Psoas muscle (tissue), 8 donors: ENCODE measurements at regions of chr2 and their contacts with region 1.

Region 1: DNA sequence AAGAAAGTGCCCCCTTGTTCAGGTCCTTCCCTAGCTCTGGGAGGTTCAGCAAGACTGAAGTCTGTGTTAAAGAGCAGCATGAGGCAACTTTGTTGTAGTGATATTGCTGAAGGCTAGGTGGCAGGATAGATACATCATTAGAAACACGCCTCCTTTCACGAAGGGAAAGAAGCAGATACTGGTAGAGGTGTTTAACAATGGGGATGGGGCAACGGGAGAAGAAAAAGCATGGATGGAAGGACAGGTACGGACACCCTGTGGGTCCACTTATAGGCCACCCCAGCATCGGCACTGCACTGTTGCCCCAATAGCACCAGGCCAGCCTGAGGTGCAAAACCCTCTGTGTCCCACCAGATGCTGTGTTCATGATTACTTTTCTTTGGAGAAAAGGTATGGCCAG is 3.5 kb upstream of the IGFBP5 start:
- DNase-seq: no peak
- ATAC-seq: peak; percentile 51 to 62 (median 60)
- H3K4me3 ChIP-seq: no peak overlapping the region
- H3K27ac ChIP-seq: peak overlapping the region; percentile 83
- H3K4me1 ChIP-seq: peaks cover 65% of the 10 kb centered on the region
- H3K27me3 ChIP-seq: no peaks in the 10 kb centered on the region
- CTCF ChIP-seq: peak; percentile 63

Region 2: DNA sequence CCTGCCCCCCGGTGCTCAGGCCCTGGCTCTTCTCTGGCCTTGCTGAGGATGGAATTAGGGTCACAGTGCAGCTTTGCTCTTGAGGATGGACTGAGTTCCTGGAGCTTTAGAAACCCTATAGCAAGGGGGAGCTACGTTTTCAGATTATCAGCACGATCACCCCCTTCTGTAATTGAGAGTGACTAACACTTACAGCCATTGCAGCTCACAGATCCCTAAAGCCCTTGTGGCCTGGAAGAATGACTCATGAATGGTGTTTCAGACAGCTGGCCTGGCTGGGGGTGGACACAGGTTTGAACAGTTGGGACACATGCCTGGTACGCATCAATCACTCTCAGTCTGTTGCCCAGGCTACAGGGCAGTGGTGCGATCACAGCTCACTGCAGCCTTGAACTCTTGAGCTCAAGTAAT is 76.2 kb after region 1 on chr2:
- intact Hi-C with region 1: loop called (anchors 1 to 5 kb)
- DNase-seq: peak; percentile 86 to 93
- ATAC-seq: peak; percentile 88 to 92 (median 89)
- H3K4me3 ChIP-seq: peak overlapping the region; percentile 37
- H3K27ac ChIP-seq: peak overlapping the region; percentile 94
- H3K4me1 ChIP-seq: peaks cover 37% of the 10 kb centered on the region
- H3K27me3 ChIP-seq: no peaks in the 10 kb centered on the region
- CTCF ChIP-seq: no peak

Region 3: DNA sequence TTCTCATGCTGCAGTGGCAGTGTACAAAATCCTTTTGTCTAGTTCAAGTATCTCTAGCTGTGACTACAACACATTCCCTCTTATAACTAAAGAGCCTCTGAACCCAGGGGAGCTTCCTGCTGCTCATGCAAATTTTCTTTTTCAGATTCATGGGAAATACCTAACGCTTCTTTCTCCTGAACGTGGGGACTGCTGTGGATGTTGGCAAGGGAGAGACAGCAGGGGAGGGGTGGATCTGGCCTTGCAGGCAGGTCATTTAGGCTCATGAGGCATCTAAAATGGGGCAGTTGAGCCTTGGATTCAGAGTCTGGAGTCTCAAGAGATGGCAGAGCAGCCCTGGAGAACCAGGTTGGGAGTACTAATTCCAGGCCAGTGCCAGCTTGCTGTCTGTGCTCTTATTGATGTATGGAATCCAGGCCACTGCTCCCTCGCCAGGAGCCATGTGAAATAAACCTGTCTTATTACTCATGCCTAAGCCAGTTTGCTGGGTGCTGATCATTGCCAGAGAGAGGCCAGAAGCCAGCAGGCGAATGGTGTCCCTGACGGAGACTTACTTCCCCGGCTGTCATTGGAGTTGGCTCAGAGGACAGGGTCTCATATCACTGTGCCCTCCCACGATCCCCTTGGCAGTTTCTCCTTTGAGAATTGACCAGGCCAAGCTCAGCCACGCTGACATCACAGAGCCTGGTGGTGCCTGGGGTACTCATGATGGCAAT is 190.2 kb after region 1 on chr2:
- intact Hi-C with region 1: loop called (anchors 2 to 5 kb)
- DNase-seq: peak; percentile 68 to 89
- ATAC-seq: peak; percentile 79 to 86 (median 81)
- H3K4me3 ChIP-seq: no peak overlapping the region
- H3K27ac ChIP-seq: peak overlapping the region; percentile 83
- H3K4me1 ChIP-seq: peaks cover 48% of the 10 kb centered on the region
- H3K27me3 ChIP-seq: no peaks in the 10 kb centered on the region
- CTCF ChIP-seq: no peak

Region 4: GRCh38 chr2:217248312-217248935 is 549.5 kb after region 1 on chr2:
- intact Hi-C with region 1: loop called in 1 of 2 experiments (anchors 10 kb)
- DNase-seq: peak; percentile 54 to 80
- ATAC-seq: peak; percentile 56 to 83 (median 80)
- H3K4me3 ChIP-seq: peak overlapping the region; percentile 27
- H3K27ac ChIP-seq: peak overlapping the region; percentile 82
- H3K4me1 ChIP-seq: peaks cover 48% of the 10 kb centered on the region
- H3K27me3 ChIP-seq: no peaks in the 10 kb centered on the region
- CTCF ChIP-seq: no peak

Region 5: DNA sequence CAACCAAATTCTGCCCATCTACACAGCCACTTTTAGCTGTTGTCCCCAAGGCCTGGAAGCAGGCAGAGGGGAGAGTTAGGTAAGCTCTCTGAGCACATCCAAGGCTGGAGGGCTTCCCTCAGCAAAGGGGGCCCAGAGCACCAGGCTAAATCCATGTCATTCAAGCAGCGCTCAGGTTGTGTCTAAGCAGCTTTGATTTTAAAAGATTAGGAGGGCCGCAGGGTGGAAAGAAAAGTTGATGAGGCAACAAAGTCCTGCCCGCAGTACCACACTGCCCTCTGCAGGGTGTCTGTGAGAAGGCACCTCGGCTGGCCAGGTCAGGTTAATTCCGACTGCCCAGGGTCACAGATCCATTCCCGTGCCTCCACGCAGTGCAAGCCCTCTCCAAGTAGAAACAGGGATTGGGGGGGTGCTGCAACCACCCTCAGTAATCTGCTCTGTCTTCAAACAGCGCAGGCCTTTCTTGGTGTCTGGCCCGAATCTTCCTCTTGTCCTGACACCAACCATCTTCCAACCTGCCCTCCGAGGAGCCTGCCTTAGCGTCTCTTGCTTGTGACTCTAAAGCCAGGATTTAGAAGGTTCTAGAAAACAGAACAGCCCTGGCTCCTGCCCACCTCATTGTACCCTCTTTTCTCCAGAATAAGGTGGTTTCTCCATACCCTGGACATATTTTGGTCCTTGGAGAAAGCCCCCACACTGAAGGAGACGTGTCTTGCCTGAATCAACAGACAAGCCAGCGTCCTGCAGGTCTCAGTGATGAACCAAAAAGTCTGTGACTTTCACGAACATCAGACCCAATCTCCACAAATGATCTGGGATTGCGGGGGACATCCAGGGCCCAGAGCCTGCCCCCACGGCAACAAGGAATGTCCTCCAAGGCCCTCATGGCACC is 1014.7 kb after region 1 on chr2:
- intact Hi-C with region 1: loop called in 1 of 2 experiments (anchors 5 kb)
- DNase-seq: peak; percentile 74 to 88
- ATAC-seq: peak; percentile 89 to 96 (median 91)
- H3K4me3 ChIP-seq: no peak overlapping the region
- H3K27ac ChIP-seq: peak overlapping the region; percentile 2
- H3K4me1 ChIP-seq: peaks cover 17% of the 10 kb centered on the region
- H3K27me3 ChIP-seq: no peaks in the 10 kb centered on the region
- CTCF ChIP-seq: peak; percentile 98